ENCODE measurements at regions of chr18 and their contacts with region 1.

Region 1: DNA sequence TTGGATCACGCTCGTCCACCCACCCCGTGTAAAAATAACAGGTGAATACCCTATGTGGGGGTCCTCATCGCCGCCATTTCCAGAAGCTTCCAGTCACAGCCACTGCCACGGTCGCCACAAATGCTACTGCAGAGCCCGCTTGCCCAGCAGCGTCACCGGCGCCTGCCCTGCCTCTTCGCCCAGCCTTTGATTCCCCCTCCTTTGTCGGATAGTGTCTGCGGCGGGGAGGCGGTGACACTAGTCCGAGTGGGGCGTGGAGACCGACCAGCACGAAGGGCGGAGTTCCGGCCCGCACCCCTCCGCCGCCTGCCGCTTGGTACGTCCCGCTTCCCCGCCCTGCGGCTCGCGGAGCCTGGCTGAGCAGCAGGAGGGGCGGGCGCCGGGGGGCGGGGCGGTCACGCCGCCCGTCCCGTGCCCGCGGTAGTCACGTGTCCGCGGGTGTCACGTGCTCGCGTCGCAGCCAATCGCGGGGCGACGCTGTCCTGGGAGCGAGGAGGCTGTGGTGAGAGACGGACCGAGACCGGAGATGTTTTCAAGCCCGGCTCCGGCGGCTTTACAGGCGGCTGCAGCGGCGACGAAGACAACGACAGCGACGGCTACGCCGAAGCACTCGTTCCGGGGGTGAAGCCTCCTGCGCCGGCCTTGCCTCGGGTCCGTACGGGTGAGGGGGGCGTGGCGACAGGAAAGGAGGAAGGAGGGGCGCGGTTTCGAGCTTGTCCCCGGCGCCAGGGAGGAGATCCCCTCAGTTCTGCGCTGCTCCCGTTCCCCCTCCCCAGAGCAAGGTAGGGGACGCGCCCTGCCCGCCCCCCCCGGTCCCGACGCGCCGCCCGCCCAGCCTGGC is at the start of gene ANKRD12:
- DNase-seq: peak; percentile 96 to 99 (median 98)
- ATAC-seq: peak; percentile 65
- H3K4me3 ChIP-seq: peak within 1 kb of the TSS; percentile 87 to 93
- H3K4me3 Mint-ChIP-seq: peak within 1 kb of the TSS; percentile 99
- H3K27ac ChIP-seq: peak within 1 kb of the TSS; percentile 94 to 96
- H3K27ac Mint-ChIP-seq: peak within 1 kb of the TSS; percentile 99
- H3K4me1 ChIP-seq: peaks cover 56% of the 10 kb centered on the region
- H3K4me1 Mint-ChIP-seq: peaks cover 68% of the 10 kb centered on the region
- H3K27me3 ChIP-seq: no peaks in the 10 kb centered on the region
- H3K27me3 Mint-ChIP-seq: no peaks in the 10 kb centered on the region
- CTCF ChIP-seq: no peak
- total RNA-seq, gene ANKRD12: 167 to 177 TPM

Region 2: GRCh38 chr18:8608795-8609658 is 527.5 kb before region 1 on chr18 and contains the start of gene RAB12:
- CTCF ChIA-PET with region 1: no interaction called
- POLR2A ChIA-PET with region 1: no interaction called
- intact Hi-C with region 1: loop called in 1 of 2 experiments (anchors 2 kb)
- DNase-seq: peak; percentile 72 to 93 (median 88)
- ATAC-seq: peak; percentile 92
- H3K4me3 ChIP-seq: peak within 1 kb of the TSS; percentile 64 to 70
- H3K4me3 Mint-ChIP-seq: peak within 1 kb of the TSS; percentile 90
- H3K27ac ChIP-seq: peak within 1 kb of the TSS; percentile 53 to 70
- H3K27ac Mint-ChIP-seq: peak within 1 kb of the TSS; percentile 90
- H3K4me1 ChIP-seq: peaks cover 42% of the 10 kb centered on the region
- H3K4me1 Mint-ChIP-seq: peaks cover 50% of the 10 kb centered on the region
- H3K27me3 ChIP-seq: no peaks in the 10 kb centered on the region
- H3K27me3 Mint-ChIP-seq: no peaks in the 10 kb centered on the region
- CTCF ChIP-seq: peak; percentile 70
- total RNA-seq, gene RAB12: 20.2 to 20.9 TPM

Region 3: GRCh38 chr18:9102508-9103375 is 33.8 kb before region 1 on chr18 and contains the start of gene NDUFV2:
- CTCF ChIA-PET with region 1: interaction called, 9 read pairs
- POLR2A ChIA-PET with region 1: interaction called, 83 read pairs
- intact Hi-C with region 1: loop called (anchors 1 kb)
- DNase-seq: peak; percentile 96 to 99 (median 98)
- ATAC-seq: peak; percentile 95
- H3K4me3 ChIP-seq: peak within 1 kb of the TSS; percentile 55 to 82
- H3K4me3 Mint-ChIP-seq: peak within 1 kb of the TSS; percentile 89
- H3K27ac ChIP-seq: peak within 1 kb of the TSS; percentile 69 to 87
- H3K27ac Mint-ChIP-seq: peak within 1 kb of the TSS; percentile 94
- H3K4me1 ChIP-seq: peaks cover 46% of the 10 kb centered on the region
- H3K4me1 Mint-ChIP-seq: peaks cover 60% of the 10 kb centered on the region
- H3K27me3 ChIP-seq: no peaks in the 10 kb centered on the region
- H3K27me3 Mint-ChIP-seq: no peaks in the 10 kb centered on the region
- CTCF ChIP-seq: no peak
- total RNA-seq, gene NDUFV2: 229 to 249 TPM

Region 4: DNA sequence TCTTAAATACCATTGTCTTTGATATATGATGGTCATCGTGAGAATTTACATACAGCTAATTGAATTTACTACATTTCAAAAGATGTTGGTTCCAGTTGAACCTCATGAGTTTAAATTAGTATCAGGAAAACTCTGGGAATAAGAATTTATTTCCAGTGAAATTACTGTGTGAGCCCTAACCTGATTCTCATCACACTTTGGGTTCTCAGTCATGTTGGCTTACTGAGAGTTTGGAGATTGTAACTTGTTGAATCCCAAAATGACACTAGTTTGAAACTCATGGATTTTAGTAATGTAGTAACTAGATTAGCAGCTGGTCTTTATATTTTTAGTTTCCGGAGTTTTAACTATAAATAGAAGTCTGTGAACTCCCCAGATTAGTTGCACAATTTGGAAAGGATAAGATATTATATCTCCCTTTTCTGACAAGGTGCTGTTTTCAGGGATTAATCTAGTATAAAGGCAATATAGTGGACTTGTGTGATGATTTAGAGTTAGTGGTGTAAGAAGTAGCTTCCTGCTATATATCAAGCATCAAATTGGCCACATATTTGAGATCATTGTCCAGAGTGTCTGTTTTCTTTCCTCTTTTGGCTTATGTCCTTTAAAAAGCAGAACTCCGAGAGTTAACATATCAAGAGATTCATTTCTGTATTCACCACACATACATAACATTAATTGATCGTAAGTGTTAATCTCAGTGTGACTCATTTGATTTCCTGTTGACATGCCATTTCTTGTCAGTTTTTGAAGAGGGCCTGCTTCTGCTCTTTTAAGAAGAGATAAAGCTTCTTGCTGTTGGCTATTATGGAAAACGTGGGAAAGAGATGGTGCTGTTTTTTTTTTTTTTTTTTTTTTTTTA is 18.3 kb before region 1 on chr18:
- CTCF ChIA-PET with region 1: interaction called, 9 read pairs
- POLR2A ChIA-PET with region 1: interaction called, 78 read pairs
- intact Hi-C with region 1: loop called (anchors 1 kb)
- DNase-seq: peak in 2 of 9 experiments; percentile 66 to 83
- ATAC-seq: peak; percentile 50
- H3K4me3 ChIP-seq: peak overlapping the region; percentile 14 to 42
- H3K4me3 Mint-ChIP-seq: peak overlapping the region; percentile 75
- H3K27ac ChIP-seq: peak overlapping the region; percentile 76 to 86
- H3K27ac Mint-ChIP-seq: peak overlapping the region; percentile 95
- H3K4me1 ChIP-seq: peaks cover 84% of the 10 kb centered on the region
- H3K4me1 Mint-ChIP-seq: peaks cover 80% of the 10 kb centered on the region
- H3K27me3 ChIP-seq: no peaks in the 10 kb centered on the region
- H3K27me3 Mint-ChIP-seq: no peaks in the 10 kb centered on the region
- CTCF ChIP-seq: no peak

Region 5: GRCh38 chr18:9147440-9148202 is 11.1 kb after region 1 on chr18:
- CTCF ChIA-PET with region 1: interaction called, 3 read pairs
- POLR2A ChIA-PET with region 1: interaction called, 3 read pairs
- intact Hi-C with region 1: loop called in 1 of 2 experiments (anchors 1 kb)
- DNase-seq: peak in 4 of 9 experiments; percentile 22 to 82 (median 52)
- ATAC-seq: peak; percentile 76
- H3K4me3 ChIP-seq: no peak overlapping the region
- H3K4me3 Mint-ChIP-seq: no peak overlapping the region
- H3K27ac ChIP-seq: peak overlapping the region in 1 of 2 experiments; percentile 63
- H3K27ac Mint-ChIP-seq: peak overlapping the region; percentile 84
- H3K4me1 ChIP-seq: peaks cover 45% of the 10 kb centered on the region
- H3K4me1 Mint-ChIP-seq: peaks cover 77% of the 10 kb centered on the region
- H3K27me3 ChIP-seq: no peaks in the 10 kb centered on the region
- H3K27me3 Mint-ChIP-seq: no peaks in the 10 kb centered on the region
- CTCF ChIP-seq: peak; percentile 71

Measured in CD8-positive, alpha-beta T cell (primary cell).